ENCODE measurements at regions of chr3 and their contacts with region 1.

Region 1: GRCh38 chr3:63911873-63912767 is at the start of gene SCAANT1:
- DNase-seq: peak; percentile 87
- ATAC-seq: peak; percentile 69
- H3K4me3 Mint-ChIP-seq: peak within 1 kb of the TSS; percentile 88
- H3K27ac Mint-ChIP-seq: peak within 1 kb of the TSS; percentile 95
- H3K4me1 Mint-ChIP-seq: peaks cover 44% of the 10 kb centered on the region
- H3K27me3 Mint-ChIP-seq: no peaks in the 10 kb centered on the region
- total RNA-seq, gene SCAANT1: not detected

Region 2: DNA sequence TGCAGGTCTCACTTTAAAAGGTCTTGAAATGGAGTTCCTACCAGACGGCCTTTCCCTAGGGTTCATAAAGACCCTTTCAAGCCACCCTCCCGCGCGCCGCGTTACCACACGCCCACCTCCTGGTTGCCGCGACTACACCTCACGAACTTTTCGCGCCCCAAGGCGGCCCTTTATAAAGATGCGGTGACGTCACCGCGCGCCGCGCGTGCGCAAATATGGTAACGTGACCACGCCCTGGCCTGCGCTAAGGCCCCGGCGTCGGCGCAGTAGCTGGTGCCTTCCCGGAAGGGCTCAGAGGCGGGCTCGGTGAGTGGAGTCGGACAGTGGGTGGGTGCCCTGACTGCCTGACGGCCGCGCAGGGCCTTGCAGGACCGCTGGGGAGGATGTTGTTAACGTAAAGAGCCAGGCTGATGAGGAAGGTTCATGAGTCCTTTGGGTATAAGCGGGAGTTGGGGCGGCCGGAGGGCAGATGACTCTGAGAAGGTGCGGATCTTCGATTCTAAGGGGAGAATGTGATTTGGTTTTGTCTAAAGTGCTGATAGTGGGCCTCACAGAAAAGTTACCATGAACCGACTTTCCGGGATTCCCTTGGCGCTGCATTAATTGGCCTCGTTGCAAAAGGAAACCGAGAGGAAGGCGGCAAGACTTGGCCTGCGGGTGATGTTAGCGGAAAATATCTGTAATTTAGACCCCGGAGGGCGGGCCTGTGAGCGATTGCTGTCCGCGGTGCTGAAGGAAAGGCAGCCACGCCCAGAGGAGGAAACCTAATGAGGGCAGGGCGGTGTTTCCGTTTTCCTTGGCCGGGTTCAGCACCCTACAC is 1593.2 kb before region 1 on chr3:
- CTCF ChIA-PET with region 1: no interaction called
- POLR2A ChIA-PET with region 1: no interaction called
- intact Hi-C with region 1: loop called in 1 of 2 experiments (anchors 10 kb)
- DNase-seq: peak; percentile 84
- ATAC-seq: peak; percentile 98
- H3K4me3 Mint-ChIP-seq: peak overlapping the region; percentile 84
- H3K27ac Mint-ChIP-seq: peak overlapping the region; percentile 100
- H3K4me1 Mint-ChIP-seq: peaks cover 11% of the 10 kb centered on the region
- H3K27me3 Mint-ChIP-seq: peaks cover 31% of the 10 kb centered on the region

Region 3: GRCh38 chr3:63863148-63864007 is 48.7 kb before region 1 on chr3 and contains the starts of genes ATXN7 and THOC7:
- CTCF ChIA-PET with region 1: no interaction called
- POLR2A ChIA-PET with region 1: no interaction called
- intact Hi-C with region 1: loop called (anchors 1 kb)
- DNase-seq: peak; percentile 82
- ATAC-seq: peak; percentile 78
- H3K4me3 Mint-ChIP-seq: peak within 1 kb of the TSS; percentile 94
- H3K27ac Mint-ChIP-seq: peak within 1 kb of the TSS; percentile 95
- H3K4me1 Mint-ChIP-seq: peaks cover 58% of the 10 kb centered on the region
- H3K27me3 Mint-ChIP-seq: no peaks in the 10 kb centered on the region
- total RNA-seq, gene ATXN7: 27.1 to 58.3 TPM
- total RNA-seq, gene THOC7: 80.8 to 87.1 TPM

Region 4: GRCh38 chr3:63961891-63962290 is 49.8 kb after region 1 on chr3:
- CTCF ChIA-PET with region 1: interaction called, 4 read pairs
- POLR2A ChIA-PET with region 1: no interaction called
- intact Hi-C with region 1: loop called (anchors 2 to 5 kb)
- DNase-seq: no peak
- ATAC-seq: peak; percentile 74
- H3K4me3 Mint-ChIP-seq: no peak overlapping the region
- H3K27ac Mint-ChIP-seq: no peak overlapping the region
- H3K4me1 Mint-ChIP-seq: peaks cover 50% of the 10 kb centered on the region
- H3K27me3 Mint-ChIP-seq: no peaks in the 10 kb centered on the region

Region 5: DNA sequence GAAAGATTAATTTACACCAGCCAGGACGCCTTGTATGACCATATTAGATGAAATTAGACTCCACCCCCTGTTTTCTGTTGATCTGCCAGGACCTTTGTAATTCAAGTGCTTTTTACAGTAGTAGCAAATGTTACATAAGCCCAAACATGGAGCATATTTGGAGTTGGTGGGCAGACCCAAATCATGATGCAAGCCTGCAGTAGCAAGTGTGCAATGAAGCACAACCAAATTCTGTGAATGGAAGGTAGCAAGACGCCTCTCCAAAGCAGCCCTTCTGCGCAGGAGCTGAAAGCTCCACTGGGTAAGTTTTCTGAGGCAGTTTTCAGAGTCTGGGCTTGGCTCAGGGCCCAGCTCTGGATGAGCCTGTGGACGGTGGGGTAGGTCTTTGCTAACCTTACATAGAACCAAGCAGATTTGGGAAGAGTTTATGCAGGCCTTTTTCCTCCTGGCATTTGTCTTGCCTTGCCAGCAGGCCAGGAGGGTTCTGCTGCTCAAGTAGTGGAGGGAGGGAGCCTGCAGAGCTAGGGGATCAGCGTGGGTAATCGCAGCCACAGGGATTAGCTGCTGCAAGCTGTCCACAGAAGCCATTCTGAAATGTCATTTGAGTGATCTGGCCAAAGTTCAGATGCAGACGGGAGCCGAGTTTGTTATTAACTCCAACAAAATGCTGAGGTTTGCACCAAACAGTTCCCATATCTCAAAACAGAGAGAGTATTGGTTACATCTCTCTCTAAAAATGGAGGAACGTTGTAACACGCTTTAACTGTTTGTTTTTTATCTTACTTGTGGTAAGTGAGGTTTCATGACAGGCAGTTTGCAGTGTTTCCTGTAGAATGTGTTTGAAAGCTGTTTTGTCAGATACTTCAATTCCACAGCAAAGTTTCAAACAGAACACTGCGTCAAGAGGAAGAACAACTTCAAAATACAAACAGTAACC is 55.8 kb after region 1 on chr3:
- CTCF ChIA-PET with region 1: no interaction called
- POLR2A ChIA-PET with region 1: no interaction called
- intact Hi-C with region 1: loop called in 1 of 2 experiments (anchors 5 kb)
- DNase-seq: peak; percentile 54
- ATAC-seq: peak; percentile 50
- H3K4me3 Mint-ChIP-seq: peak overlapping the region; percentile 75
- H3K27ac Mint-ChIP-seq: peak overlapping the region; percentile 89
- H3K4me1 Mint-ChIP-seq: peaks cover 80% of the 10 kb centered on the region
- H3K27me3 Mint-ChIP-seq: no peaks in the 10 kb centered on the region